ENCODE measurements at regions of chr9 and their contacts with region 1.

Region 1: DNA sequence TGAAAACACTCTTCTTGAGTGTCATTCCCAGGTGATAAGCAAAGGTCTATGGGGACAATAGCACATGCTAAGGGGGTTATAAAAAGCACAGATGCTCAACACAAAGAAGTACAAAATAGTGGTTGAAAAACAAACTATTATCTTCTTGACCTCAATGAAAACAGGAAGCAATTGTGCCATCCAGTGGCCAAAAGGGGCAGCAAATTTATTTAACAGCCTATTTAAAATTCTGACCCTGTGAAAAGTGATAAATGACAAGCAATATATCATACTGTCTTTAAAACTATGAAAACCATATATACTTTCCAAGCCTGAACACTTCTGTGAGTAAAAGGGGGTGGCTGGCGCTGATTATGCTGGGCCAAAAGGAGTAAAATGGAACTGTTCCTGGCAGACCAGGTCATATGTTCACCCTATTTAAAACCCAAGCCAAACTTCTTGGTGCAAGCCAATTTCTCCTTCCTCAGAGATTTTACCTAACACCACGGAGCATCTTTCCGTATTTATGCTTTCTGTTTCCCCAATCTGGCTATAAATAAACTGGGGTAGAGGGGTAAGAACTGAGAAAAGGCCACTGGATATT is 29.7 kb downstream of the TEX10 start:
- DNase-seq: peak; percentile 54 to 69 (median 65)
- H3K4me3 ChIP-seq: no peak overlapping the region
- H3K27ac ChIP-seq: no peak overlapping the region
- H3K4me1 ChIP-seq: no peaks in the 10 kb centered on the region
- H3K27me3 ChIP-seq: no peaks in the 10 kb centered on the region

Region 2: GRCh38 chr9:99162759-99163364 is 1160.2 kb before region 1 on chr9:
- CTCF ChIA-PET with region 1: interaction called, 15 read pairs
- POLR2A ChIA-PET with region 1: no interaction called
- DNase-seq: peak; percentile 59 to 83 (median 71)
- H3K4me3 ChIP-seq: no peak overlapping the region
- H3K27ac ChIP-seq: no peak overlapping the region
- H3K4me1 ChIP-seq: peaks cover 3 to 9% (median 7%) of the 10 kb centered on the region in 4 experiments
- H3K27me3 ChIP-seq: peaks cover 0 to 17% (median 6%) of the 10 kb centered on the region in 5 experiments

Region 3: GRCh38 chr9:100346836-100347235 is 23.8 kb after region 1 on chr9:
- CTCF ChIA-PET with region 1: interaction called, 13 read pairs
- POLR2A ChIA-PET with region 1: no interaction called
- DNase-seq: no peak
- H3K4me3 ChIP-seq: no peak overlapping the region
- H3K27ac ChIP-seq: no peak overlapping the region
- H3K4me1 ChIP-seq: peaks cover 11 to 26% (median 19%) of the 10 kb centered on the region in 4 experiments
- H3K27me3 ChIP-seq: no peaks in the 10 kb centered on the region

Measured in common myeloid progenitor, CD34-positive (primary cell).